MCF 10A (cell line): ENCODE measurements at regions of chr17 and their contacts with region 1.

Region 1: GRCh38 chr17:4565209-4566141 is 5.1 kb upstream of the GGT6 start:
- DNase-seq: peak; percentile 84
- H3K4me3 Mint-ChIP-seq: no peak overlapping the region
- H3K27ac Mint-ChIP-seq: peak overlapping the region; percentile 44
- H3K4me1 Mint-ChIP-seq: peaks cover 14% of the 10 kb centered on the region
- H3K27me3 Mint-ChIP-seq: no peaks in the 10 kb centered on the region
- CTCF ChIP-seq: peak; percentile 79

Region 2: DNA sequence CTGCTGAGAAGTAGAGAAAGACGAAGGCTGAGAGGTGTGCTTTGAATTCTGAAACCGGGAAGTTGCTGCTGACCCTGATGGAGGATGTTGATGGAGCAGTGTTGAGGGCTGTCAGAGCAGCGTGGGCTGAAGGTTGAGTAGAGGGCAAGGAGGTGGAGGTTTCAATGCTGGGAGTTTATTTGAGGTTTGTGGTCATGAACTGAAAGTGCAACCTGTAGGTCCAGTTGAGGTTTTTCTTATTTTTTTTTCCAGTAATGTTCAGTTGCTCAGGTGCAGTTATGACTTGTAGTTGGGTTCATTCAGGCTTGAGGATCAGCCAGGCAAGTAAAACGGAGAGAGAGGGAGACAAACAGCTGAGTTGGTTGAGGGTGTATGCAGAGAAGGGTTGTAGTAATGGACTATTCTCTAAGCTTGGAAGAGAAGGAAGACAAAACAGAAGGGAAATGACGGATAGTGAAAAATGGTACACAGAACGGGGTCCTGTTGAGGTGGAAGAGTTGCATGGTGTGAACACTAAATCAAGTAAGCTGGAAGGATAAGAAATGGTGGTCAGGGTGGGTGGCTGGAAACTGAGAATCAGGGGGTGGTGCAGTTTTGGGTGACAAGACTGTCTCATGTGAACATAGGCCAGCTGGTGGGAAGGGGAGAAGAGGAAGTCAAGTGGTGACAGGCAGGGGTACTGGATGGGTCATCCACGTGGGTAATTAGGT is 190.3 kb before region 1 on chr17:
- CTCF ChIA-PET with region 1: no interaction called
- POLR2A ChIA-PET with region 1: no interaction called
- intact Hi-C with region 1: no loop called
- DNase-seq: no peak
- H3K4me3 Mint-ChIP-seq: no peak overlapping the region
- H3K27ac Mint-ChIP-seq: no peak overlapping the region
- H3K4me1 Mint-ChIP-seq: no peaks in the 10 kb centered on the region
- H3K27me3 Mint-ChIP-seq: no peaks in the 10 kb centered on the region
- CTCF ChIP-seq: no peak

Region 3: GRCh38 chr17:4554997-4555799 is 10.3 kb before region 1 on chr17 and contains the start of gene MYBBP1A:
- CTCF ChIA-PET with region 1: interaction called, 23 read pairs
- POLR2A ChIA-PET with region 1: interaction called, 11 read pairs
- intact Hi-C with region 1: no loop called
- DNase-seq: peak; percentile 95
- H3K4me3 Mint-ChIP-seq: peak within 1 kb of the TSS; percentile 80
- H3K27ac Mint-ChIP-seq: peak within 1 kb of the TSS; percentile 75
- H3K4me1 Mint-ChIP-seq: peaks cover 9% of the 10 kb centered on the region
- H3K27me3 Mint-ChIP-seq: no peaks in the 10 kb centered on the region
- CTCF ChIP-seq: no peak
- total RNA-seq, gene MYBBP1A: 78.3 and 123 TPM in 2 replicates

Region 4: DNA sequence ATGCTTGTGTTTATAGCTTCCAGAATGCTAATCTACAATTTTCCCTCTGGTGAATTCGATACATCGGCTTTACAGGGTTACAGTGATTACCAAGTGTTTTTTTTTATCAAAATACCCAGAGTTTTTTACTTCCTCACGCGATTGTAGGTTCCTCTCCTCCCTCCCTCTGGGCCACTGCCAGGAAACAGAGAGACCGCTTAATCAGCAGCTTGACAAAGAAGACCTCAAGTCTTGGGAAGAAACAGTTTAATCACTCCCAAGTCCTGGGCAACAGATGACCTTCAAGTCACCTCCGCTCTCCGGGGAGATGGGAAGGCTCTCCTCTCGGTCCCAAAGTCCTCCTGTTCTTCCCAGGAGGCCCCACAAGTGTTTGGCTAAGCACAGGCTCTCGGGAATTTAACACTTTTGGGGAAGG is 42.3 kb after region 1 on chr17:
- CTCF ChIA-PET with region 1: interaction called, 10 read pairs
- POLR2A ChIA-PET with region 1: no interaction called
- intact Hi-C with region 1: no loop called
- DNase-seq: no peak
- H3K4me3 Mint-ChIP-seq: no peak overlapping the region
- H3K27ac Mint-ChIP-seq: no peak overlapping the region
- H3K4me1 Mint-ChIP-seq: no peaks in the 10 kb centered on the region
- H3K27me3 Mint-ChIP-seq: peaks cover 42% of the 10 kb centered on the region
- CTCF ChIP-seq: no peak

Region 5: GRCh38 chr17:4625181-4625617 is 59.7 kb after region 1 on chr17:
- CTCF ChIA-PET with region 1: interaction called, 191 read pairs
- POLR2A ChIA-PET with region 1: interaction called, 6 read pairs
- intact Hi-C with region 1: loop called (anchors 1 kb)
- DNase-seq: no peak
- H3K4me3 Mint-ChIP-seq: no peak overlapping the region
- H3K27ac Mint-ChIP-seq: no peak overlapping the region
- H3K4me1 Mint-ChIP-seq: no peaks in the 10 kb centered on the region
- H3K27me3 Mint-ChIP-seq: no peaks in the 10 kb centered on the region
- CTCF ChIP-seq: no peak

Region 6: GRCh38 chr17:4903051-4903818 is 337.8 kb after region 1 on chr17 and contains the start of gene CHRNE:
- CTCF ChIA-PET with region 1: no interaction called
- POLR2A ChIA-PET with region 1: no interaction called
- intact Hi-C with region 1: loop called (anchors 5 kb)
- DNase-seq: peak; percentile 87
- H3K4me3 Mint-ChIP-seq: peak within 1 kb of the TSS; percentile 13
- H3K27ac Mint-ChIP-seq: peak within 1 kb of the TSS; percentile 71
- H3K4me1 Mint-ChIP-seq: peaks cover 17% of the 10 kb centered on the region
- H3K27me3 Mint-ChIP-seq: no peaks in the 10 kb centered on the region
- CTCF ChIP-seq: peak; percentile 66
- total RNA-seq, gene CHRNE: not detected in 2 replicates